ENCODE measurements at regions of chr6 and their contacts with region 1.

Region 1: DNA sequence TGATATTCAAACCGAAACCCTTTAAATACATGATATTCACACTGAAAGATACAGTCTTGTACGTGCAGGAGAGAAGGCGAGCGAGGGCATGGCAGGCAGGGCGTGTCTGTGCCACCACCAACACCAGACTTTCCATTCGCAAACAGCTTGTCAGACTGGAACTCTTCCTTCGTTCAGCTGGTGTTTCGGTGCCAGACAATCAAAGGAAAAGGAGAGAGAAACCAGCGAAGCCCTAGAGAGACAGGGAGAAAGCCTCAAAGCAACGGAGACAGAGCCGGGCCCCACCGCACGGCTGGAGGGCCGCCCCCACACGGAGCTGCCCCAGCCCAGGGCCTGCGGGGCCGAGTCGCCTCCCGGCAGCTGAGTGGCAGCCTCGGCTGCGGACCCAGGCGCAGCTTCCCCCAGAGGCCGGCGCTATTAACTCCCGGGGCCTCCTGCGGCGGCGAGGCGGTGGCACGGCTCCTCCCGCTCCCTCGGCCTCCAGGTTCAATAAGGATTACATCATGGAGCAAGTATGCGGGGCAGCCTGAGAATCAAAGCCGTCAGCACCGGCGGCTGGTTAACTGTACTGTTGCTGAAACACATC is 32.1 kb upstream of the NR2E1 start:
- DNase-seq: peak; percentile 61
- H3K4me3 Mint-ChIP-seq: peak overlapping the region; percentile 80
- H3K27ac Mint-ChIP-seq: no peak overlapping the region
- H3K4me1 Mint-ChIP-seq: peaks cover 6% of the 10 kb centered on the region
- H3K27me3 Mint-ChIP-seq: peaks cover 72% of the 10 kb centered on the region

Region 2: GRCh38 chr6:108157234-108157980 is 23.7 kb after region 1 on chr6:
- intact Hi-C with region 1: loop called (anchors 2 kb)
- DNase-seq: peak; percentile 56
- H3K4me3 Mint-ChIP-seq: no peak overlapping the region
- H3K27ac Mint-ChIP-seq: no peak overlapping the region
- H3K4me1 Mint-ChIP-seq: peaks cover 4% of the 10 kb centered on the region
- H3K27me3 Mint-ChIP-seq: peaks cover 85% of the 10 kb centered on the region

Region 3: DNA sequence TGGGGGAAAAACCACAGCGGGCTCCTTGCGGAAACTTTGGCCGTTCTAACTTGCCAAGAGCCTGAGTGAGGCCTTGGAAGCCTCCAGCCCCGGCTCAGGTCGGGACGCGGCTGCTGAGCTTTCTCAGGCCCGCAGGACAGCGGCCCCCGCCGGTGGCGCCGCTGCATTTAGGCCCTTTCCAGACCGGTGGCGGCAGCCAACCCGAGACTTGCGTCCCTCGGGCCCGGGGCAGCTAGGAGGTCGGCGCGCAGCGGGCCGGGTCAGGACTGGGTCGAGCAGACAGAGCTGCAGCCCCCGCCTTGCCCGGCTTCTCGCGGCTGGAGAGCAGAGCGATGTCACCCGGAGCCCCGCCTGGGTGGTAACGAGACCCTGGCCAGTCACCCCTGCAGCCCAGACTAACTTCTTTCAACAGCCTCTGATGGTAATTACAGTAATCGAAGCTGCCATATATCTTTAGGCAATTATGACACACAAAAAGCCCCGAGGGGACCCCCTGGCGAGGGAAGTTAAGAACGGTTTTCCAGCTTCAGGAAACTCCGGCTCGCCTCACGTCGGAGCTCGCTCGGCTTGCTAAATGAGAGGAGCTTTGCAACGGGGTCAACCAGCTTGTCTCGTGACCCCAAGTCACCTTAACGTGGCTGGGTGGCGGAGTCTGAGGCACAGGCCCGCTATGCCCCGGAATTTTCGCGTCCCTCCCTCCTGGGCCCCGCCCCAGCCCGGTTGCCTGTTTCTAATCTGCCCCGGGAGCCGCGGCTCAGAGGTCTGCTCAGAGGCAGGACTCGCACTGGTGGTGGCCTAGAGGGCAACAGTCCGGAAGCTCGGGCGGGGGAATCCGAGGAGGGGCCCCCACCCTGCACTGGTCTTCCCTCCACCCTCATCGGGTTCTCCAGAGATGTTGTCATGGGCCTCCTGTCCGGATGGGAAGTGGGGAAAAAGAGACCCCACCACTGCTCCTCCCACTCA is 35.1 kb after region 1 on chr6:
- intact Hi-C with region 1: loop called (anchors 2 kb)
- DNase-seq: peak; percentile 60
- H3K4me3 Mint-ChIP-seq: peak overlapping the region; percentile 7
- H3K27ac Mint-ChIP-seq: no peak overlapping the region
- H3K4me1 Mint-ChIP-seq: peaks cover 18% of the 10 kb centered on the region
- H3K27me3 Mint-ChIP-seq: peaks cover 87% of the 10 kb centered on the region

Region 4: DNA sequence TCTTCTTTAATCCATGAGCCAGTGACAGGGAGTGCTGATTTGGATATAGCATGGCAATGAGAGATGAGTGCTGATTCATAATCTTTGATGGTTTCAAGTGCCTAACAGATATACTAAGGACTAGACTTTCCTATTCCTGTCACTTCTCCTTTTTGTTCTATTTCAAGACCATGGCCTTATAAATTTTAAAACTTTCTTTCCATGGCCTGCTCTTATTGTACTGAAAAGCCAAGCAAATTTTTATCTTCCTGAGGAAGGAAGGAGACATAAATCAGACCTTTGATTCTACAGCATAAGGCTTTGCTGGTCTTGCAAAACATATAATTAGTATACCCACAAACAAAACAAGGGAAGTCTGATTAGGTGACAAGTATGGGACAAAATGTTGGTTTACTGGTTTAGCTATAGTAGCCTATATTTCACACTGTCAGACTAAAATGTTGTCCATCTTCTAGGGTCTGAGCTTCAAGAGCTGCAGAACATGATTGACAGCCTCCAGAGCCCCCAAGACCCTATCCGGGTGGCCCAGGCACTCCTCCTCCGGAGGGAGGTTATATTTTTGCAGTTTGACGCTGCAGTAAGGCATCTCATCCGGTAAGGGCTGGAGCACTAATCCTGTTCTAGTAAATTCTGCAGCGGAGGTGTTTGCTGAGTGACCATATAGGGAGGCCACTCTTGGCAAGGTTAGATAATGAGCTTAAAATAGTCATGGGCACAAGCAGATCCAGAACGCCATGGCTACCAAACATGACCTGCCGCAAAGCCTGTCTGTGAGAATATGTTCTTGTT is 1166.3 kb after region 1 on chr6:
- intact Hi-C with region 1: no loop called
- DNase-seq: no peak
- H3K4me3 Mint-ChIP-seq: no peak overlapping the region
- H3K27ac Mint-ChIP-seq: no peak overlapping the region
- H3K4me1 Mint-ChIP-seq: peaks cover 11% of the 10 kb centered on the region
- H3K27me3 Mint-ChIP-seq: peaks cover 2% of the 10 kb centered on the region